Natural killer cell (primary cell): ENCODE measurements at regions of chr9 and their contacts with region 1.

Region 1: GRCh38 chr9:112361601-112362000 is 18.3 kb upstream of the HSDL2 start:
- DNase-seq: peak in 1 of 2 donors; percentile 76
- ATAC-seq: no peak
- H3K4me3 ChIP-seq: no peak overlapping the region
- H3K4me3 Mint-ChIP-seq: no peak overlapping the region
- H3K27ac ChIP-seq: no peak overlapping the region
- H3K27ac Mint-ChIP-seq: no peak overlapping the region
- H3K4me1 ChIP-seq: no peaks in the 10 kb centered on the region
- H3K4me1 Mint-ChIP-seq: no peaks in the 10 kb centered on the region
- H3K27me3 ChIP-seq: no peaks in the 10 kb centered on the region
- H3K27me3 Mint-ChIP-seq: peaks cover 7 to 13% of the 10 kb centered on the region in 2 donors
- CTCF ChIP-seq: peak; percentile 87

Region 2: GRCh38 chr9:111759762-111760639 is 601.6 kb before region 1 on chr9:
- intact Hi-C with region 1: loop called (anchors 1 kb)
- DNase-seq: peak in 1 of 2 donors; percentile 83
- ATAC-seq: peak; percentile 72 to 82 (median 73)
- H3K4me3 ChIP-seq: no peak overlapping the region
- H3K4me3 Mint-ChIP-seq: no peak overlapping the region
- H3K27ac ChIP-seq: no peak overlapping the region
- H3K27ac Mint-ChIP-seq: no peak overlapping the region
- H3K4me1 ChIP-seq: no peaks in the 10 kb centered on the region
- H3K4me1 Mint-ChIP-seq: peaks cover 0 to 4% of the 10 kb centered on the region in 2 donors
- H3K27me3 ChIP-seq: no peaks in the 10 kb centered on the region
- H3K27me3 Mint-ChIP-seq: no peaks in the 10 kb centered on the region
- CTCF ChIP-seq: peak; percentile 75

Region 3: DNA sequence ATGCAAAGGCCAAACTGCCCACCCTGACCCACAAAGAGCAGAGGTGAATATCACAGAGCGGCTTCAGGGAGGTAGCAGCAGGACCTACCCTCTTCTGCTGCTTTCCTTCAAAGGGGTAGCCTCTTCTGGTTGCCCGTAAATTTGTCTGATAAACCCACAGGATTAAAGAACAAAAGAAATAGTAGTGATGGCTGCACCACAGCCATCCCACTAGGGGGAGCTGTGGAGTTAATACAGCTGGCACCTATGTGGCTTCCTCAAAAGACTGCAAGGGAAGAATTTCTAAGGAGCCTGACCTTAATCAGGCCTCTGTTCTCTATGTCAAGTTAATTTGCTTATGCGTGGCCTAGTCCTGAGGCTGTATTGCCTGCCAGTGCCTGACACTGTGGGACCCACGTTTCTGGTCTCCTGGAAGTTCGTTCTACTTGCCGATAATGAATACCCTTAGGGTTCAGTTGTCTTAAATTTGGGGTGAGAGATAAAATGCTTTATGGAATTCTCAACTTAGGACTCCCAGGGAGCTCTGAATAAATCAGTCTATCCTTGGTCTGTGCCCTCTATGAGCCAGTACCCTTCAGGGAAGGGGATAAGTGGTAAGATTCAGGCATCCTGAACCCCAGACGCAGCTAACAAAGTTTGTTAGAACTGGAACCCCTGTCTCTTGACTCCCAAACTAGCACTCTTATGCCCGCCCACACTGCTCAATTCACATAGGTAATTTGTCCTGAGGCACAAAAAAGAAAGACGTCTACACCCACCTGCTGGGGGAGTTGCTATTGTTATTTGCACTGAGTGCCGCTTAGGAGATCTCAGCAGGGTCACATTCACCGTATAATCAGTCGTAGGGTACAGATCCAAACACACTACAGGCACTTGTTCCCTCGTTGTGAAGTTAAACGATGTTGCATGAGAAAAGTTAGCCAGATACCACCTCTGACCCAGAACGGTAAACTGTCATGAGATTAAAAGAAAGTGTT is 263.6 kb before region 1 on chr9:
- intact Hi-C with region 1: loop called (anchors 1 kb)
- DNase-seq: peak; percentile 47 to 89
- ATAC-seq: peak; percentile 87 to 94 (median 91)
- H3K4me3 ChIP-seq: no peak overlapping the region
- H3K4me3 Mint-ChIP-seq: no peak overlapping the region
- H3K27ac ChIP-seq: no peak overlapping the region
- H3K27ac Mint-ChIP-seq: peak overlapping the region; percentile 59 to 63
- H3K4me1 ChIP-seq: peaks cover 10% of the 10 kb centered on the region
- H3K4me1 Mint-ChIP-seq: peaks cover 30 to 34% of the 10 kb centered on the region in 2 donors
- H3K27me3 ChIP-seq: no peaks in the 10 kb centered on the region
- H3K27me3 Mint-ChIP-seq: no peaks in the 10 kb centered on the region
- CTCF ChIP-seq: peak; percentile 89

Region 4: GRCh38 chr9:112112941-112113681 is 248.5 kb before region 1 on chr9:
- intact Hi-C with region 1: loop called (anchors 1 kb)
- DNase-seq: peak in 1 of 2 donors; percentile 56
- ATAC-seq: peak in 2 of 3 donors; percentile 42 to 52
- H3K4me3 ChIP-seq: no peak overlapping the region
- H3K4me3 Mint-ChIP-seq: no peak overlapping the region
- H3K27ac ChIP-seq: no peak overlapping the region
- H3K27ac Mint-ChIP-seq: peak overlapping the region in 1 of 2 donors; percentile 14
- H3K4me1 ChIP-seq: peaks cover 4% of the 10 kb centered on the region
- H3K4me1 Mint-ChIP-seq: peaks cover 14 to 15% of the 10 kb centered on the region in 2 donors
- H3K27me3 ChIP-seq: no peaks in the 10 kb centered on the region
- H3K27me3 Mint-ChIP-seq: no peaks in the 10 kb centered on the region
- CTCF ChIP-seq: peak; percentile 41